Thyroid gland (tissue), 4 donors: ENCODE measurements at regions of chr1 and their contacts with region 1.

Region 1: GRCh38 chr1:237041795-237042525 is at the start of gene RYR2:
- DNase-seq: peak; percentile 74 to 82
- H3K4me3 ChIP-seq: peak within 1 kb of the TSS; percentile 14 to 76 (median 40)
- H3K27ac ChIP-seq: peak within 1 kb of the TSS; percentile 45 to 72 (median 64)
- H3K4me1 ChIP-seq: peaks cover 25% of the 10 kb centered on the region in 2 donors
- H3K27me3 ChIP-seq: no peaks in the 10 kb centered on the region
- CTCF ChIP-seq: peak; percentile 41 to 84 (median 58)
- POLR2A ChIP-seq: peak in 1 of 2 donors; percentile 75
- total RNA-seq, gene RYR2: 6.6 to 31.8 (median 28.2) TPM

Region 2: DNA sequence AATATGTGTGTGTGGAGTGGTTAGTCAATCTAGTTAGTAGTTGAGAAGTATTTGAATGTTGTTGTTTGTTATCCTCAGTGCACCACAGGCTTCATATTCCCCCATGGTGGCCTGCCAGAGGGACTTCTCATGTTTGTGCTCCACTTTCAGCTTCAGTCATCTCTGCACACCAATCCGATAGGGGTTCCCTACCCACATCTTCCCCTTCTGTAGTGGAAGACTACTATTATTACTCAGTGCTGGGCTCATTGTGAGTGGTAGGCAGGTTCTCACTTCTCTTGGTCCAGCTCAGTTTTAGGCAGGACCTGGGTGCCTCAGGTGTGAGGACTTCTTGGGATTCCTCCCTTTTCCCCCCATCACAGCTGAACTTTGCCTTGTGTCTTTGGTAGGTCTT is 51.9 kb before region 1 on chr1:
- intact Hi-C with region 1: no loop called
- DNase-seq: no peak
- H3K4me3 ChIP-seq: no peak overlapping the region
- H3K27ac ChIP-seq: no peak overlapping the region
- H3K4me1 ChIP-seq: no peaks in the 10 kb centered on the region
- H3K27me3 ChIP-seq: no peaks in the 10 kb centered on the region
- CTCF ChIP-seq: no peak
- POLR2A ChIP-seq: no peak

Region 3: DNA sequence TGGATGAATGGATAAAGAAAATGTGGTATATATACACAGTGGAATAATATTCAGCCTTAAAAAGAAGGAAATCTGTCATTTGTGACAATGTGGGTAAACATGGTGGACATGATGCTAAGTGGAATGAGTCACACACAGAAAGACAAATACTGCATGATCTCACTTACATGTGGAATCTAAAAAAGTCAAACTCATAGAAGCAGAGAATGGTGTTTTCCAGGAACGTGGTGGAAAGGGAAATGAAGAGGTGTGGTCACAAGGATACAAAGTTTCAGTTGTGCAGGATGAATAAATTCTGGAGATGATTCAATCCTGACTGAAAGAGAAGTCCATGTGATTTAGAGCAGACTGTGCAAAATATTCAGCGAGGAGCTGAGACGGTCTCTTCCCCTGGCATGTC is 56.6 kb after region 1 on chr1:
- intact Hi-C with region 1: no loop called
- DNase-seq: no peak
- H3K4me3 ChIP-seq: no peak overlapping the region
- H3K27ac ChIP-seq: no peak overlapping the region
- H3K4me1 ChIP-seq: peaks cover 11 to 17% of the 10 kb centered on the region in 2 donors
- H3K27me3 ChIP-seq: no peaks in the 10 kb centered on the region
- CTCF ChIP-seq: no peak
- POLR2A ChIP-seq: no peak

Region 4: DNA sequence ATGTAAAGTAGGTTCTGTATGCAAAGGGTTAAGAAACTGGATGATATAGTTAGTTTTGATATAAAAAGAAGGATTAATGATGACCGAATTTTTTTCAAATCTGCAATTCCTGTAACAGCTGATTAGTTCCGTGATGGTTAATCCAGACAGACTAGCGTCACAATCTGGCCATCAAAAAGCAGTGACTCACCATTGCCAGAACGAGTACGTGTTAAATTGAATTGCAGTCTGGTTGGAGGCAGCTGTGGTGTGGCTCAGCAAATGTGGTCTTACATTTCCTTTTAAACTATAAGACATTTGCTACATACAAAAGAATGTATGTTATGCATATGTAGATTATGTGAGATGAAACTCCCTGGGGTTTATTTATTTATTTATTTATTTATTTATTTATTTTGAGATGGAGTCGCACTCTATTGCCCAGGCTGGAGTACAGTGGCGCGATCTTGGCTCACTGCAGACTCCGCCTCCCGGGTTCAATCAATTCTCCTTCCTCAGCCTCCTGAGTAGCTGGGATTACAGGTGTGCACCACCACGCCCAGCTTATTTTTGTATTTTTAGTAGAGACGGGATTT is 139.9 kb after region 1 on chr1:
- intact Hi-C with region 1: no loop called
- DNase-seq: no peak
- H3K4me3 ChIP-seq: no peak overlapping the region
- H3K27ac ChIP-seq: no peak overlapping the region
- H3K4me1 ChIP-seq: peaks cover 3 to 6% of the 10 kb centered on the region in 2 donors
- H3K27me3 ChIP-seq: no peaks in the 10 kb centered on the region
- CTCF ChIP-seq: no peak
- POLR2A ChIP-seq: no peak

Region 5: GRCh38 chr1:237235091-237235490 is 193.1 kb after region 1 on chr1:
- intact Hi-C with region 1: loop called (anchors 10 kb)
- DNase-seq: peak; percentile 81 to 85
- H3K4me3 ChIP-seq: no peak overlapping the region
- H3K27ac ChIP-seq: peak overlapping the region; percentile 77 to 84 (median 83)
- H3K4me1 ChIP-seq: peaks cover 37 to 39% of the 10 kb centered on the region in 2 donors
- H3K27me3 ChIP-seq: no peaks in the 10 kb centered on the region
- CTCF ChIP-seq: no peak
- POLR2A ChIP-seq: no peak

Region 6: DNA sequence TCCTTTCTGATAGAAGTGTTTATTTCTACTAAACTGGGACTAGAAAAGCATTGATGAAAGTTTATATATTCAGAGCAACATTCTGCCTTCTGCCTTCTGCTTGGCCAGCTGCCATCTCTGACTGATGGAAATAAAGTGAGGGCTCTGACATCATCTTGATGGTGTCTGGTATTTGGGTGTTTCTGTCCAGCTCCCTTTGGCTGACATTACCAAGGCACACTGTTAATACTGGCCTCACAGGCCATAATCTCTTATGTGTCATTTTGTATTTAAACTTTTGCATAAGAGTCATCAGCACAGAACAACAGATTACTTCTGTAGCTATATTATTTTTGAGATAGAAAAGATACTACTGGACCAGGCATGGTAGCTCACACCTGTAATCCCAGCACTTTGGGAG is 216.9 kb after region 1 on chr1:
- intact Hi-C with region 1: no loop called
- DNase-seq: peak; percentile 60 to 68
- H3K4me3 ChIP-seq: no peak overlapping the region
- H3K27ac ChIP-seq: no peak overlapping the region
- H3K4me1 ChIP-seq: peaks cover 6 to 13% of the 10 kb centered on the region in 2 donors
- H3K27me3 ChIP-seq: no peaks in the 10 kb centered on the region
- CTCF ChIP-seq: no peak
- POLR2A ChIP-seq: no peak